ENCODE measurements at regions of chr4 and their contacts with region 1.

Region 1: GRCh38 chr4:55853484-55854046 is at the start of gene EXOC1:
- DNase-seq: peak; percentile 98 to 99 (median 99)
- ATAC-seq: peak; percentile 100
- H3K4me3 ChIP-seq: peak within 1 kb of the TSS; percentile 55 to 98 (median 91)
- H3K27ac ChIP-seq: peak within 1 kb of the TSS; percentile 64 to 92 (median 87)
- H3K4me1 ChIP-seq: peaks cover 3 to 30% (median 18%) of the 10 kb centered on the region in 12 donors
- H3K27me3 ChIP-seq: no peaks in the 10 kb centered on the region
- CTCF ChIP-seq: no peak
- POLR2A ChIP-seq: peak in 1 of 2 donors; percentile 68
- total RNA-seq, gene EXOC1: 15.2 to 27.7 (median 21.4) TPM

Region 2: DNA sequence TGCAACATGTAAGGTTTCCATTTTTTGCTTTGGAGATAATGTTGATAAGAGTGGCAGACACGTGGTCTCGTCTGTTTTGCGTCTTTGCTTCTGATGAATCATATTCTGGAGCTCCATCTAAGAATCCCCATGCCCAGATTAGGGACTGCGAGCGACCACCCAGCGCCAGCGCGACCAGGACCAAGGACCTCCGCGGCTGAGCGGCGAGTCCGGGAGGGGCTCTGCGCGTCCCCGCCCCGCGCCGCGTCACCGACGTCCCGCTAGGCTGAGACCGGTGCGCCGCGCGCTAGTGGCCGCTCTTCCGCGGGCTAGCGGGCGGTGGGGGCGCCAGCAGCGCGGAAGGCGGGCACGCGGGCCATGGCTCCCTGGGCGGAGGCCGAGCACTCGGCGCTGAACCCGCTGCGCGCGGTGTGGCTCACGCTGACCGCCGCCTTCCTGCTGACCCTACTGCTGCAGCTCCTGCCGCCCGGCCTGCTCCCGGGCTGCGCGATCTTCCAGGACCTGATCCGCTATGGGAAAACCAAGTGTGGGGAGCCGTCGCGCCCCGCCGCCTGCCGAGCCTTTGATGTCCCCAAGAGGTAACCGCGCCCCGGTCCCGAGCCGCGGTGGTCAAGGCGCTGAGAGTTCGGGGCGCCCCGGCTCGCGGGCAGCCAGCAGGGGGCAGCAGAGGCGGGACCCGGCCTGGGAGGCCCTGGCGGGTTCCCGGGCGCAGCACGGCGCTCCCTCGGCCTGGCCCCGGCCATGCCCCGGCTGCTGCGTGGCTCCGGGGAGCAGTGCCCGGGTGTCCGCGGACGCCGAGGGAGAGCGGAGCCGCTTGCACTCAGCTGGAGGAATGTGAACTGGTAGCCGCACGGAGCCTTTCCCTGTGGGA is 507.4 kb before region 1 on chr4 and contains the start of gene SRD5A3:
- intact Hi-C with region 1: loop called in 2 of 10 experiments (anchors 10 kb)
- DNase-seq: peak; percentile 86 to 94 (median 88)
- ATAC-seq: peak; percentile 94 to 98 (median 96)
- H3K4me3 ChIP-seq: peak within 1 kb of the TSS; percentile 48 to 97 (median 80)
- H3K27ac ChIP-seq: peak within 1 kb of the TSS; percentile 89 to 100 (median 98)
- H3K4me1 ChIP-seq: peaks cover 4 to 31% (median 16%) of the 10 kb centered on the region in 12 donors
- H3K27me3 ChIP-seq: no peaks in the 10 kb centered on the region
- CTCF ChIP-seq: peak; percentile 90 to 99 (median 98)
- POLR2A ChIP-seq: peak in 1 of 2 donors; percentile 72
- total RNA-seq, gene SRD5A3: 4.5 to 16.8 (median 7.8) TPM

Region 3: GRCh38 chr4:55435141-55435841 is 418.3 kb before region 1 on chr4:
- intact Hi-C with region 1: loop called in 1 of 10 experiments (anchors 10 kb)
- DNase-seq: no peak
- ATAC-seq: peak in 2 of 4 donors; percentile 42 to 47
- H3K4me3 ChIP-seq: no peak overlapping the region
- H3K27ac ChIP-seq: peak overlapping the region in 1 of 12 donors; percentile 10
- H3K4me1 ChIP-seq: peaks cover 0 to 6% (median 0%) of the 10 kb centered on the region in 12 donors
- H3K27me3 ChIP-seq: no peaks in the 10 kb centered on the region
- CTCF ChIP-seq: peak in 2 of 12 donors; percentile 12 to 18
- POLR2A ChIP-seq: no peak

Region 4: DNA sequence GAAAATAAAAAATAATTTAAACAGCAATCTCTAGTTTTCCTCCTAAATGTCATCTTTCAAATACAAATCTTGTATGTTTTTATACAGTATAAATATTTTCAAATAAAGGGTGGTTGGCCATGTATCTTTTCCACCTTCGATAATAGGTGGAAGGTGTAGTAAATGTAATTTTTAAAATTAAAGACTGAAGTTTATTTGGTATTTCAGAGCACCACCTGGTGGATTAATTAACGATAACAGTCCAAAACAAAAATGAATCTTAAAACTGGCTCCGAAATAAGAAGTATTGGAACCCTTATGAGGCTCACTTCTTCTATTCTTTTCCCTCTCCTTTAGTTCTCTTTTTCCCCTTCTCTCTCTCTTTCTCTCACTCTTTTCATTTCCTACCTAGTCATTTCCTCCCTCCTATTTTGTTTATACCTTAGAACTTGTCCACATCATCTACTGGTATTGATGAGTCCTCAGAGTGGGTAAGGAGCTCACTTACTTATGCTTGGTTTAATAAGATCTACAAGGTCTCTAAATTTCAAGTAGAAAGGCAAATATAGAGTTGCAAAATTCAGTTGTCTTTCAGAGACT is 116.9 kb before region 1 on chr4:
- intact Hi-C with region 1: no loop called
- DNase-seq: no peak
- ATAC-seq: no peak
- H3K4me3 ChIP-seq: no peak overlapping the region
- H3K27ac ChIP-seq: no peak overlapping the region
- H3K4me1 ChIP-seq: no peaks in the 10 kb centered on the region
- H3K27me3 ChIP-seq: peaks cover 0 to 12% (median 0%) of the 10 kb centered on the region in 9 donors
- CTCF ChIP-seq: peak in 8 of 12 donors; percentile 10 to 48 (median 36)
- POLR2A ChIP-seq: no peak